Stomach (tissue), 19 donors: ENCODE measurements at regions of chr19 and their contacts with region 1.

Region 1: DNA sequence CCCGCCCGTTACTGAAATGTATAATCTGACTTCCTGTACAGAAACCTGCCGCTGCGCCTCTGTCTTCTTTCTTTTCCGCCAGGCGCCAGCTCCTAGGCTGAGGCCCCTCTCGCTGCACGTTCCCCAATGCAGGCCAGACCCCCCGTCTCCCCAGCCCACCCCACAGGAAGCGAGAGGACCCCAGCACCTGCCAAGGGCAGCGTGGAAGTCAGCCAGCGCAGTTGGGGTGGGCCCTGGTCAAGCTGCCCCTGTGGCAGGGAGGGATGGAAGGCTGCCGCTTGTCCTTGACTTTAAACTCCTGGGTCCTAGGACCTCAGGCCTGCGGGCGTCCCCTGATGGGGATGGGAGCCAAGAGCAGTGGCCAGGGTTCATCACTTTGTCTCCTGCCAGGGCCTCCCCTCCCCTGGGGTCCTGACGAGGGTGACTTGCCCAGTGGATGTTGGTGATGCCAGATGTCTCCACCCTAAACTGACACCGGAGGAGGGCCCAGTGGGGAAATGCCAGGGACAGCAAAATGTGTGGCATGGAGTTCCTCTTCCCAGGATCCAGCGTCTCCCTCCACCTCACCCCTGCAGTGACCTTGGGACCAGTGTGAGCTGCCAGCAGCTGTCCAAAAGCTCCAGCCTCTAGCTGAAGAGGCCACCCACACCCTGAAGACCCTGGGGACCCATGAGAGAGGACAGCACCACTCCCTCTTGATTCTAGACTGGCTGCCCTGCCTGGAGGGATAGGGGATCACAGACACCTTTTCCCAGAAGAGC is 8.5 kb upstream of the MARCHF2 start:
- DNase-seq: no peak
- H3K4me3 ChIP-seq: no peak overlapping the region
- H3K27ac ChIP-seq: no peak overlapping the region
- H3K4me1 ChIP-seq: no peaks in the 10 kb centered on the region
- H3K27me3 ChIP-seq: no peaks in the 10 kb centered on the region
- CTCF ChIP-seq: no peak
- EP300 ChIP-seq: no peak
- POLR2A ChIP-seq: no peak

Region 2: GRCh38 chr19:8505680-8506401 is 101.3 kb after region 1 on chr19:
- intact Hi-C with region 1: loop called (anchors 10 kb)
- DNase-seq: peak; percentile 83 to 90
- H3K4me3 ChIP-seq: peak overlapping the region; percentile 51 to 69 (median 56)
- H3K27ac ChIP-seq: peak overlapping the region in 4 of 5 donors; percentile 1 to 70 (median 36)
- H3K4me1 ChIP-seq: peaks cover 12 to 31% (median 17%) of the 10 kb centered on the region in 4 donors
- H3K27me3 ChIP-seq: peaks cover 0 to 6% (median 0%) of the 10 kb centered on the region in 3 donors
- CTCF ChIP-seq: peak in 6 of 7 experiments; percentile 60 to 89 (median 73)
- EP300 ChIP-seq: no peak
- POLR2A ChIP-seq: no peak